Endothelial cell of umbilical vein (primary cell): ENCODE measurements at regions of chr14 and their contacts with region 1.

Region 1: DNA sequence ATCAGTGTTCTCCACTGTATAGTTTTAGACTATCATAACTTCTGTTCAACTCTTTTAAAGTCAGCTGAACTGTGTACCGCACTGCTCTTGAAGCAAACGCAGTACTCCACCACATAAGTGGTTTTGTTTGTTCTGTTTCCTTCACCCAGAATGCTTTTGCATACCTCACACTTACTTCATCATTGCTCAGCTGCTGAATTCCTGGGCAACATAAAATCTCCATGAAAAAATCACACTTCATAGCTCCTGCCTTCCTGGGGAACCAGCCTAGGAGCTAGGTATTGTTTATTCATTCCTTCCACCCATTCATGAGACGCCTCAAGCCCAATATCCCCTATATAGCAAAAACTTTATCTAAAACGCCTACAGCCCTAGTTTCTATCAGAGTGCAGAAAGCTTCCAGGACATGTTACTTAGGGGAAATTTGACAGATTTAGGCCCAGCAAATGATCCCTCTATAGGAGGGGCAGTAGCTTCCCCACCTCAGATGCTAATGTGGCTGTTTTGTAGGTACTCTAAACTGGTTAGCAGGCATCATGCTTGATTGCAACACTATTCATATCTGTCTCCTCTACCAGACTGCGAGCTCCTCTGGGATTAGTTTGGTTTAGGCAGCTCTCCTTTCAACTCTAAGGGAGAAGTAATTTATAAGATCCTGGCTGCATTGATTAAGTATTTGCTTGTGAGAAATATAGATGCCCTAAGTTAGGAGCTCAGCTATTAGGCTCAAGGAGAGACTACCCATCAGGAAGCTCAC is 44.5 kb downstream of the LRRC9 start:
- DNase-seq: no peak
- H3K4me3 ChIP-seq: no peak overlapping the region
- H3K27ac ChIP-seq: no peak overlapping the region
- H3K4me1 ChIP-seq: no peaks in the 10 kb centered on the region
- H3K27me3 ChIP-seq: peaks cover 5 to 21% of the 10 kb centered on the region in 2 experiments
- CTCF ChIP-seq: no peak
- POLR2A ChIP-seq: no peak

Region 2: DNA sequence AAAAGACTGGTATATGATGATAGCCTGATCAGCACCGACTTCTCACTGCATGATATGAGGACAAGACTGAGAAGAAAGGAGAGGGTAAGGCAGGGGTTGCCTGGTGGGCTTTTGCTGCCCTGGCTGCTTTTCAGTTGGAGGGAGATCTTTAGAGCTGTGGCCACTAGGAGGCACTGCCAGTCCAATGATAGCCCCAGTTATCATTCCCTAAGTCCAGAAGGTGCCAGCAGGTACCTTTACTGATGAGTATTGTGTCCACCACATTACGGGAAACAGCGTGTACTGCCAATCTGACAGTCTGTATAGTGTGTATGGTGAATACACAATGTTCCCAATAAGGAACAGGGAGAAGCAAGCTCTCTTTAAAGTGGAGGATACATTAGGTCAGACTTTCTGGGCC is 332.0 kb before region 1 on chr14:
- CTCF ChIA-PET with region 1: interaction called, 3 read pairs
- POLR2A ChIA-PET with region 1: no interaction called
- dilution Hi-C with region 1: no loop called
- intact Hi-C with region 1: loop called (anchors 2 kb)
- DNase-seq: peak; percentile 24
- H3K4me3 ChIP-seq: no peak overlapping the region
- H3K27ac ChIP-seq: no peak overlapping the region
- H3K4me1 ChIP-seq: no peaks in the 10 kb centered on the region
- H3K27me3 ChIP-seq: peaks cover 16 to 47% of the 10 kb centered on the region in 2 experiments
- CTCF ChIP-seq: peak; percentile 49 to 52
- POLR2A ChIP-seq: no peak

Region 3: GRCh38 chr14:59981564-59981963 is 17.1 kb after region 1 on chr14:
- CTCF ChIA-PET with region 1: interaction called, 29 read pairs
- POLR2A ChIA-PET with region 1: no interaction called
- dilution Hi-C with region 1: no loop called
- intact Hi-C with region 1: no loop called
- DNase-seq: no peak
- H3K4me3 ChIP-seq: no peak overlapping the region
- H3K27ac ChIP-seq: no peak overlapping the region
- H3K4me1 ChIP-seq: no peaks in the 10 kb centered on the region
- H3K27me3 ChIP-seq: peaks cover 2 to 3% of the 10 kb centered on the region in 2 experiments
- CTCF ChIP-seq: no peak
- POLR2A ChIP-seq: no peak

Region 4: GRCh38 chr14:60064491-60065072 is 100.2 kb after region 1 on chr14:
- CTCF ChIA-PET with region 1: interaction called, 27 read pairs
- POLR2A ChIA-PET with region 1: no interaction called
- dilution Hi-C with region 1: no loop called
- intact Hi-C with region 1: loop called (anchors 2 kb)
- DNase-seq: peak; percentile 48
- H3K4me3 ChIP-seq: no peak overlapping the region
- H3K27ac ChIP-seq: no peak overlapping the region
- H3K4me1 ChIP-seq: no peaks in the 10 kb centered on the region
- H3K27me3 ChIP-seq: peaks cover 0 to 2% of the 10 kb centered on the region in 2 experiments
- CTCF ChIP-seq: peak; percentile 18 to 25
- POLR2A ChIP-seq: no peak

Region 5: DNA sequence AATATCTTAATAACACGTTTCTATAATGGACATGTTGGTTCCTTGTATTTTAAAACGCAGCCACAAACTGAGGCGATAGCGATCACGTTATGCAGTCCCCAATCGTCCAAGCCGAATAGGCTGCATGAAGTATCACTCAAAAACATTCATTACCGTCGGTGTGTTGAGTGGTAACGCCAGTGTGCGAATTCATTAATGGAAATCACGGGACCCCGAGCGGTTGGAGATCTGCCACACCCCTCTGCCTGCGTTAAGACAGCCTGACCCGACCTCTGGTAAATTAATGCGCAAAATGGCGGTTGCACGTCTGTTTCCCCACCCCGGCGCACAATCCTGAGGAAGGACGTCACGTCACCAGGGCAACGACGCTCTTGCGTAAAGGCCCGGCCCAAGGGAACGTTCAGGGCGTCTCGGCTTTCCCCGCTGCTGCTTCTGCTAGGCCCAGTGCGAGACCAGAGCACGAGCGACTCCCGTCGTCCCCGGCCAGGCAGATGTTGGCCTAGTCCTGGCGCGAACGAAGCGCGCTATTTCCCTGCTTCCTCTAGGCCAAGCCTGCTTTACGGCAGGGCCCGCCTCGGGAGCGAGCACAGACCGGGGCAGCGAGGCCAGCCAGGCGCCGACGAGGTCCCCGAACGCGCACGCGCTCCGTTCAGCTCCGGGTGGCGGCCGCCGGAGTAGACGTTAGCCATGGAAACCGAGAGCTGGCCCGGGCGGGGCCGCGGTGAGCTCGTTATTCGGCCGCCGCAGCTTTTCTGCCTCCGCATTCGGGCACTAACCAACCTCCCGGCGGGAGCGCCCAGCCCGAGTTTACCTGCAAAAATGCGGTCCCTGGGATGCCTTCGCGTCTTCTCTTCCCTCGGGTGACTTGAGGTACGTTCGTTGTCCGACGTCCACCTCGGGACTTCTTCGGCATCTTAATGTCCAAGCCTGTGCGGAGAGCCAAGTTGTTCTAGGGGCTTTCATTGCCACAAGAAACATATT is 127.4 kb after region 1 on chr14 and contains the start of gene PCNX4:
- CTCF ChIA-PET with region 1: no interaction called
- POLR2A ChIA-PET with region 1: no interaction called
- dilution Hi-C with region 1: no loop called
- intact Hi-C with region 1: loop called (anchors 1 kb)
- DNase-seq: peak; percentile 99
- H3K4me3 ChIP-seq: peak within 1 kb of the TSS; percentile 68 to 86 (median 86)
- H3K27ac ChIP-seq: peak within 1 kb of the TSS; percentile 93
- H3K4me1 ChIP-seq: peaks cover 25% of the 10 kb centered on the region
- H3K27me3 ChIP-seq: no peaks in the 10 kb centered on the region
- CTCF ChIP-seq: no peak
- POLR2A ChIP-seq: peak; percentile 96
- total RNA-seq, gene PCNX4: 41.4 and 51.6 TPM in 2 replicates

Region 6: GRCh38 chr14:60164712-60165546 is 200.5 kb after region 1 on chr14 and contains the start of gene DHRS7:
- CTCF ChIA-PET with region 1: interaction called, 6 read pairs
- POLR2A ChIA-PET with region 1: no interaction called
- dilution Hi-C with region 1: no loop called
- intact Hi-C with region 1: loop called (anchors 1 kb)
- DNase-seq: peak; percentile 82
- H3K4me3 ChIP-seq: peak within 1 kb of the TSS; percentile 46 to 84 (median 79)
- H3K27ac ChIP-seq: peak within 1 kb of the TSS; percentile 22
- H3K4me1 ChIP-seq: peaks cover 10% of the 10 kb centered on the region
- H3K27me3 ChIP-seq: no peaks in the 10 kb centered on the region
- CTCF ChIP-seq: peak; percentile 12 to 21
- POLR2A ChIP-seq: peak; percentile 59
- total RNA-seq, gene DHRS7: 29.3 and 35.7 TPM in 2 replicates

Region 7: GRCh38 chr14:60561845-60562746 is 597.7 kb after region 1 on chr14:
- CTCF ChIA-PET with region 1: interaction called, 15 read pairs
- POLR2A ChIA-PET with region 1: no interaction called
- dilution Hi-C with region 1: no loop called
- intact Hi-C with region 1: loop called (anchors 5 kb)
- DNase-seq: peak; percentile 59
- H3K4me3 ChIP-seq: no peak overlapping the region
- H3K27ac ChIP-seq: no peak overlapping the region
- H3K4me1 ChIP-seq: no peaks in the 10 kb centered on the region
- H3K27me3 ChIP-seq: peaks cover 0 to 8% of the 10 kb centered on the region in 2 experiments
- CTCF ChIP-seq: peak; percentile 45 to 70
- POLR2A ChIP-seq: no peak